Dendritic cell treated with granulocyte-macrophage colony-stimulating factor and Interleukin-4, amounts not matched to agents 40 ng/mL and 50 ng/mL, for 4 days (primary cell): ENCODE measurements at regions of chrX and their contacts with region 1.

Region 1: GRCh38 chrX:85003655-85004244 is at the start of gene APOOL:
- H3K4me3 Mint-ChIP-seq: peak within 1 kb of the TSS; percentile 81
- H3K27ac Mint-ChIP-seq: peak within 1 kb of the TSS; percentile 87
- H3K4me1 Mint-ChIP-seq: peaks cover 24% of the 10 kb centered on the region
- H3K27me3 Mint-ChIP-seq: peaks cover 2% of the 10 kb centered on the region

Region 2: DNA sequence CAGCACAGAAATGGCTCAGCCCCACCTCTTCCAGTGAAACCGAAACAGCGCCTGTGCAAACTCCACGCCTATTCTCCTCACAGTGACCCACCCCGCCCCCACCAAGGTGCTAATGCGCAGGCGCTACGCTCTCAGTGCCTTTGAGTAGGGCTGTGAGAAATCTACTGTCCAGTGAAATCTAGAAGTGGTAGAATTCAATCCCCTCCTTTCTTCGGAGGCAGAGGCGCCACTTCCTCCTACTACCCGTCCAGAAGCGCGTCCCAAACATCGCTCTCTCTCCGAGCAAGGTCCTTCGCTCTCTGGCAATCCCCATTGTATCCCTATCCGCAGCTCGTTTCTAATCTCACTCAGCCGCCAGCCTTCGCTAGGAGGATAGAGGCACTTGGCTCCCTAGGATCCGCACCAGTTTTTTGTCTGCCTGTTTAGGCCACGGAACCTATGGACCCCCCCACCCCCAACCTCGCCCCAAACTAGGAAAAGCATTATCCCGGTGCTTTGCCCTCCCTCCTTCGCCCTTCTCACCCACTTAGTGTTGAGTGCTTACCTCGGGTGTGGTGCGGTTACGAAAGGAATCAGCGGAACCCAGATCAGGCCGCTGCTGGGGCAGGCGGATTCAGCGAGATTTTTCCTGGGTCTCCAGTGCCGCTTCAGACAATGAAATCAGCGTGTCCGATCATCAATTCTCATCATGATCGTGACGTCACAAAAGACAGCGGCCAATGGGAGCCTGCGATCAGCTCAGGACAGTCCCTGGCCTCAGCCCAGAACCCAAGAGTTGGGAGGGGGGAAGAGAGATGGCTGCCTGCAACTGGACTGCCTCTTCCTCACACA is 501.7 kb before region 1 on chrX and contains the start of gene HDX:
- intact Hi-C with region 1: loop called (anchors 10 kb)
- H3K4me3 Mint-ChIP-seq: peak within 1 kb of the TSS; percentile 75
- H3K27ac Mint-ChIP-seq: peak within 1 kb of the TSS; percentile 94
- H3K4me1 Mint-ChIP-seq: peaks cover 8% of the 10 kb centered on the region
- H3K27me3 Mint-ChIP-seq: no peaks in the 10 kb centered on the region

Region 3: DNA sequence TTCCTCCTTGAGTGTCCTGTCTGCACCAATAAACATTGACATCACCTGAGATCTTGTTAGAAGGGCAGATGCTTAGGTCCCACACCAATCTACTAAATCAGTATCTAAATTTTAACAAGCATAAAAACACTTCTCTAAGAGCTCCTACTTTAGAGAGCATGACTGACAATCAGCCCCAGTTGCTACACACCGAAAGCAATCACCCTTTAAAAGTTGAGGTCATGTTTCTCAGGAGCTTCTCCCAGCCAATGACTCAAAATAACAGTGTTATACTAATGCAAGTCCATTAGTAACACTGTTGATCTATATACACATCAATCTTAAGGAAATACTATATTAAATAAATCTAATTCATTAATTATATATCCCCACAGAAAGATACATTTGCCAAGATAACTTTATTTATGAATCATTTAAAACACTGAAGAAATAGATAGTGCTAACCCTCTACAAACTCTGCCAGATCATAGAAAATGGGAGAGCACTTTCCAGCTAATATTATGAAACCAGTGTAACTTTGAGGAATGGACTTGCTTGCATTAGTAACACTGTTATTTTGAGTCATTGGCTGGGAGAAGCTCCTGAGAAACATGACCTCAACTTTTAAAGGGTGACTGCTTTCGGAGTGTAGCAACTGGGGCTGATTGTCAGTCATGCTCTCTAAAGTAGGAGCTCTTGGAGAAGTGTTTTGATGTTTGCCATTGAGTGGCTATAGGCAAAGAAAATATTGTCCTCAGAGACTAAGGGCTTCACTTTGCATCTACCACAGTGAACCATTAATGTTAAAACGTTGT is 391.7 kb before region 1 on chrX:
- intact Hi-C with region 1: no loop called
- H3K4me3 Mint-ChIP-seq: no peak overlapping the region
- H3K27ac Mint-ChIP-seq: no peak overlapping the region
- H3K4me1 Mint-ChIP-seq: no peaks in the 10 kb centered on the region
- H3K27me3 Mint-ChIP-seq: no peaks in the 10 kb centered on the region

Region 4: DNA sequence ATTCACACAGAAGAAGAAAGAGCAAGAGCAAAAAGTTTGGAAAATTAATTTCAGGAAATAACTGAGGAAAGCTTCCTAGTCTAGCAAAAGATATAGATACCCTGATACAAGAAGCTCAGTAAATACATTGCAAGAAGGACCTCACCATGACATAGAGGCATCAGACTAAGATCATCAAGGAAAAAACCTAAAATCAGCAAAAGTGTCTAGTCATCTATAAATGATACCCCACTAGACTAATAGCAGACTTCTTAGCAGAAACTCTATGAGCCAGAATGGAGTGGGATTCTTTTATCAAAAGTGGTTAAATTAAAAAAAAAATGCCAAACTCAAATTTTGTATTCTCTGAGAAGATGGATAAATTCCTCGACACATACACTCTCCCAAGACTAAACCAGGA is 10.6 kb before region 1 on chrX:
- intact Hi-C with region 1: no loop called
- H3K4me3 Mint-ChIP-seq: no peak overlapping the region
- H3K27ac Mint-ChIP-seq: no peak overlapping the region
- H3K4me1 Mint-ChIP-seq: no peaks in the 10 kb centered on the region
- H3K27me3 Mint-ChIP-seq: no peaks in the 10 kb centered on the region